ENCODE measurements at regions of chr16 and their contacts with region 1.

Region 1: GRCh38 chr16:361872-362701 is 8.3 kb downstream of the MRPL28 start:
- DNase-seq: peak; percentile 70 to 75 (median 71)
- H3K4me3 ChIP-seq: no peak overlapping the region
- H3K4me3 Mint-ChIP-seq: peak overlapping the region in 6 of 8 donors; percentile 43 to 78 (median 55)
- H3K27ac ChIP-seq: no peak overlapping the region
- H3K27ac Mint-ChIP-seq: peak overlapping the region in 4 of 7 donors; percentile 72 to 80 (median 77)
- H3K4me1 ChIP-seq: peaks cover 8% of the 10 kb centered on the region
- H3K4me1 Mint-ChIP-seq: peaks cover 2 to 9% (median 5%) of the 10 kb centered on the region in 4 donors
- H3K27me3 ChIP-seq: no peaks in the 10 kb centered on the region
- H3K27me3 Mint-ChIP-seq: no peaks in the 10 kb centered on the region

Region 2: GRCh38 chr16:106623-107324 is 255.3 kb before region 1 on chr16:
- CTCF ChIA-PET with region 1: interaction called, 16 read pairs
- POLR2A ChIA-PET with region 1: interaction called, 4 read pairs
- intact Hi-C with region 1: loop called (anchors 1 kb)
- DNase-seq: peak in 4 of 5 donors; percentile 61 to 70 (median 66)
- H3K4me3 ChIP-seq: no peak overlapping the region
- H3K4me3 Mint-ChIP-seq: no peak overlapping the region
- H3K27ac ChIP-seq: no peak overlapping the region
- H3K27ac Mint-ChIP-seq: peak overlapping the region in 2 of 7 donors; percentile 11 to 29
- H3K4me1 ChIP-seq: peaks cover 4% of the 10 kb centered on the region
- H3K4me1 Mint-ChIP-seq: peaks cover 1 to 6% (median 4%) of the 10 kb centered on the region in 4 donors
- H3K27me3 ChIP-seq: no peaks in the 10 kb centered on the region
- H3K27me3 Mint-ChIP-seq: no peaks in the 10 kb centered on the region

Region 3: DNA sequence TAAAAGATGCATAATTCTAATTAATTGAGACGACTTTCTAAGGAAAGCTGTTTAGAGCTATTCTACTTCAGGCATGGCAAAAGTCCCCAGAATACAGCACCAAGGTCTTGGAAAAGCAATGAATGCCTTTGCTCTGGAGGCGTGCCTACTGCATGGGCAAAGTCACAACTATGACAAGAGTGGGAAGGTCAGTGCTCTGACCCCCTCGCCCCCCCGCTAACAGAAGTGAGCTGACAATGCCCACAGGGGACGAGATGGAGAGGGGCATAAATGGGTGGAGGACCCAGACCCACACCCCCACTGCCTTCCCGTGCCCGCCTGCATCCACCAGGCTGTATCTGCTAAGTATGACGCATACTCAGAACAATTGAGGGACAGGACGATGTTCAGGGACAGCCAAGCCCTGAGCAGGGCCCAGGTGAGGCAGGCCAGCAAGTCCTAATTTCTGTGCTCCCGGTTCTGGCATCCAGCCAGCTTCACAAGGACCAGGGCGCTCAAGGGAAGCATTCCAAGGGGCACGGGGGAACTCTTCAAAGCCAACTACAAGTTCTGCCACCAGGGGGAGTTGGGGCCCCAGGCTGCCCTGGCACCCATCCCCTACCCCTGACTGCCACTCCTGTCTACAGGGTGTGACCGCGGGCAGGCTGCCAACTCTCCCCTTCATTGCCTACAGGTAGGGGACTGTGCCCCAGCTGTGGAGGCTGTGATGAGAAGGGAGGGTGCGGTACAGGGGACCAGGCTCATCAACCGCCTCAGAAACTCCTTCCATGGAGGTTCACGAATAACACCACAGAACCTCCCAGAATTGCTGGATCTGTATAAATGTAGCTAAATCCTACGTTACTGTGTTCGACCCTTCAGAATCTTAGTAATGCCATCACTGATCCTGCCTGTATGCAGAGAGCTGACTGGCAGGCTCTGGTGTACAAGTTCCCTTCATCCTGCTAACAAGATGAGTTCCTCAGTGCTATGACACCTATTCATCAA is 244.4 kb before region 1 on chr16:
- CTCF ChIA-PET with region 1: interaction called, 23 read pairs
- POLR2A ChIA-PET with region 1: no interaction called
- intact Hi-C with region 1: no loop called
- DNase-seq: peak; percentile 54 to 67 (median 60)
- H3K4me3 ChIP-seq: no peak overlapping the region
- H3K4me3 Mint-ChIP-seq: no peak overlapping the region
- H3K27ac ChIP-seq: no peak overlapping the region
- H3K27ac Mint-ChIP-seq: no peak overlapping the region
- H3K4me1 ChIP-seq: no peaks in the 10 kb centered on the region
- H3K4me1 Mint-ChIP-seq: peaks cover 0 to 5% (median 1%) of the 10 kb centered on the region in 4 donors
- H3K27me3 ChIP-seq: no peaks in the 10 kb centered on the region
- H3K27me3 Mint-ChIP-seq: no peaks in the 10 kb centered on the region

Region 4: GRCh38 chr16:180938-181667 is 181.0 kb before region 1 on chr16:
- CTCF ChIA-PET with region 1: interaction called, 4 read pairs
- POLR2A ChIA-PET with region 1: no interaction called
- intact Hi-C with region 1: loop called (anchors 2 kb)
- DNase-seq: peak; percentile 79 to 84 (median 82)
- H3K4me3 ChIP-seq: peak overlapping the region in 1 of 2 donors; percentile 41
- H3K4me3 Mint-ChIP-seq: peak overlapping the region in 4 of 8 donors; percentile 31 to 63 (median 48)
- H3K27ac ChIP-seq: no peak overlapping the region
- H3K27ac Mint-ChIP-seq: peak overlapping the region in 2 of 7 donors; percentile 40 to 70
- H3K4me1 ChIP-seq: peaks cover 21% of the 10 kb centered on the region
- H3K4me1 Mint-ChIP-seq: peaks cover 2 to 16% (median 9%) of the 10 kb centered on the region in 4 donors
- H3K27me3 ChIP-seq: peaks cover 24% of the 10 kb centered on the region
- H3K27me3 Mint-ChIP-seq: peaks cover 12 to 18% of the 10 kb centered on the region in 2 donors

Region 5: GRCh38 chr16:200388-200787 is 161.7 kb before region 1 on chr16:
- CTCF ChIA-PET with region 1: no interaction called
- POLR2A ChIA-PET with region 1: no interaction called
- intact Hi-C with region 1: no loop called
- DNase-seq: no peak
- H3K4me3 ChIP-seq: no peak overlapping the region
- H3K4me3 Mint-ChIP-seq: no peak overlapping the region
- H3K27ac ChIP-seq: no peak overlapping the region
- H3K27ac Mint-ChIP-seq: no peak overlapping the region
- H3K4me1 ChIP-seq: no peaks in the 10 kb centered on the region
- H3K4me1 Mint-ChIP-seq: no peaks in the 10 kb centered on the region
- H3K27me3 ChIP-seq: no peaks in the 10 kb centered on the region
- H3K27me3 Mint-ChIP-seq: no peaks in the 10 kb centered on the region

Region 6: GRCh38 chr16:228818-229730 is 133.0 kb before region 1 on chr16 and contains the start of gene LUC7L:
- CTCF ChIA-PET with region 1: interaction called, 13 read pairs
- POLR2A ChIA-PET with region 1: interaction called, 6 read pairs
- intact Hi-C with region 1: no loop called
- DNase-seq: peak; percentile 82 to 89 (median 85)
- H3K4me3 ChIP-seq: peak within 1 kb of the TSS; percentile 48 to 84
- H3K4me3 Mint-ChIP-seq: peak within 1 kb of the TSS; percentile 86 to 96 (median 90)
- H3K27ac ChIP-seq: peak within 1 kb of the TSS; percentile 97
- H3K27ac Mint-ChIP-seq: peak within 1 kb of the TSS; percentile 91 to 98 (median 96)
- H3K4me1 ChIP-seq: peaks cover 23% of the 10 kb centered on the region
- H3K4me1 Mint-ChIP-seq: peaks cover 15 to 41% (median 33%) of the 10 kb centered on the region in 4 donors
- H3K27me3 ChIP-seq: no peaks in the 10 kb centered on the region
- H3K27me3 Mint-ChIP-seq: no peaks in the 10 kb centered on the region
- total RNA-seq, gene LUC7L: 147 to 157 TPM

Measured in CD4-positive, alpha-beta memory T cell (primary cell).